Ascending aorta (tissue), 2 donors: ENCODE measurements at regions of chr14 and their contacts with region 1.

Region 1: DNA sequence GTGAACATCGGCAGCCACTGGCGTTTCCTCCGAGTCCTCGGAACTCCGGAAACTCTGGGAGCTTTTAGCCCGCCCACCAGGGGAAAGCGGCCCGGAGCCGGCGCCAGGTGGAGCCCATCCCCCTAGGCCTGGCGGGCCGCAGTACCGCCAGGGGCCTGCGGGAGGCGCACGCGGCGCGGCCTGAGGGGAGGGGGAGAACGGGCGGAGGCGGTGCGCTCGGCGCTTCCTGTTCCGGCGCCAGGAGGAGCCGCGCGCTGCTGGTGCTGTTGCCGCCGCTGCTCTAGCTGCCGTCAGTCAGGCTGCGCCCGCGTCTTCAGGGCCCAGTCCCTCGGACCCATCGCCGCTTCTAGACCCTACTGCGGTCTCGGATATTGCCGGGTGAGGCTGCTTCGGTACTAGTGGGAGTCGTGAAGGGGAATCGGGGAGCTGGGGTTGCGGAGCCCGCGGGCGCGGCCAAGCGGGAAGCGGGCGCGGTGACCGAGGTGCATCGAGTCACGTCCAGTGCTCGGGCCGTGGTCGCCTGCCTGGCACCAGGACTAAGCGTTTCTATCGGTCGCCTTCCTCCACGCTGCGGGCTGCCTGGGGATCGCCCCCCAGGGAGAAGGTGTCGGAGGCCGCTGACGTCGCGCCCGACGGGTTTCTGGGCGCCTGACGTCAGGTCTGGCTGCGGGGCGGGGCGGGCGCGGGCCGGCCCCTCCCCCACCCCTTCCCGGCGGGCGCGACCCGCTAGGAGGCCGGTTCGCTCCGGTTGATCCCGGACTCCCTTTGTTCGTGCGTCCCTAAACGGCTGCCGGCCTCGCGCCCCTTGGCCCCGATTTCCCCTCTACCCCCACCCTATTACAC is at the start of gene MAPK1IP1L:
- DNase-seq: peak; percentile 57 to 94
- H3K4me3 ChIP-seq: peak within 1 kb of the TSS; percentile 88 to 94
- H3K27ac ChIP-seq: peak within 1 kb of the TSS; percentile 99 to 100
- H3K4me1 ChIP-seq: peaks cover 6 to 20% of the 10 kb centered on the region in 2 donors
- H3K27me3 ChIP-seq: no peaks in the 10 kb centered on the region
- CTCF ChIP-seq: peak; percentile 100
- total RNA-seq, gene MAPK1IP1L: 51.8 TPM

Region 2: DNA sequence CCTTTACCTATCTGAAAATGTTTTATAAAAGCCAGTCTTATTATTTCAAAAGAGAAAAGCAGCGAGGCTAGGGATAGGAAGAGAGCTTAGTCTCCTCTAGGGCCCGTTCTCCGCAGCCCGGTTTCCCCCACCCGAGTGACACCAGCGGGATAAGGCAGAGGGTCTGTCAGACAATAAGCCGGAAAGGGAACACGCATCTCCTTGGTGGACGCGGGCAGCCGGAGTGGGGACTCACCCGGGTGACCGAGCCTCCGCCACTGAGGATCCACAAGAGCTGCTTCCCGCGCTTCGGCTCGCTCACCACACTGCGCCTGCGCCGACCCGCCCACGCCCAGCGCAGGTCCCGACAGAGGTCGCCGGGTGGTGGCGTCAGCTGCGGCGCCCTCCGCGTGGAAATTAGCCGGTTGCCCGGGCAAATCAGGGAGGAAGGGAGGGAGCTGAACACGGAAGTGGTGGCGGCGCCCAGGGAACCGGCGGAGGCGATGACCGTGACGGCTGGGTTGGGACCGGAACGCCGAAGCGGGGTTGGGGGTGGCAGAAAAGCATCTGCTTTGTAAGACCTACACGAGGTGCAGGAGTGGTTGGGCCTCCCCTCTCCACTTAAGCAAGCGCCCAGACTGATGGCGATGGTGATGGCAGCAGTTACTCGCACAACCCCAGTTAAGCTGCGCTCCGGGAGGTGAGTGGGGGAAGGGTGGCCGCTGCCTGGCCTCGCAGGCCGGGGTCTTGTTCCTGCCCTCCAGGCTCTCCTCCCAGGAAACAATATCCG is 24.7 kb before region 1 on chr14 and contains the starts of genes SOCS4 and WDHD1:
- intact Hi-C with region 1: loop called (anchors 1 kb)
- DNase-seq: peak; percentile 82 to 97
- H3K4me3 ChIP-seq: peak within 1 kb of the TSS; percentile 91 to 93
- H3K27ac ChIP-seq: peak within 1 kb of the TSS; percentile 82 to 91
- H3K4me1 ChIP-seq: peaks cover 4 to 15% of the 10 kb centered on the region in 2 donors
- H3K27me3 ChIP-seq: no peaks in the 10 kb centered on the region
- CTCF ChIP-seq: peak; percentile 2 to 14 (median 10)
- total RNA-seq, gene SOCS4: 12.9 TPM
- total RNA-seq, gene WDHD1: 0.11 TPM

Region 3: GRCh38 chr14:55094321-55095157 is 42.9 kb after region 1 on chr14:
- intact Hi-C with region 1: loop called (anchors 1 kb)
- DNase-seq: no peak
- H3K4me3 ChIP-seq: no peak overlapping the region
- H3K27ac ChIP-seq: no peak overlapping the region
- H3K4me1 ChIP-seq: no peaks in the 10 kb centered on the region
- H3K27me3 ChIP-seq: no peaks in the 10 kb centered on the region
- CTCF ChIP-seq: no peak

Region 4: GRCh38 chr14:55129428-55130195 is 78.0 kb after region 1 on chr14:
- intact Hi-C with region 1: loop called (anchors 2 kb)
- DNase-seq: peak in 1 of 2 donors; percentile 88
- H3K4me3 ChIP-seq: peak overlapping the region; percentile 77 to 92
- H3K27ac ChIP-seq: peak overlapping the region; percentile 95 to 97
- H3K4me1 ChIP-seq: peaks cover 10 to 34% of the 10 kb centered on the region in 2 donors
- H3K27me3 ChIP-seq: no peaks in the 10 kb centered on the region
- CTCF ChIP-seq: peak in 1 of 3 experiments; percentile 14

Region 5: GRCh38 chr14:56339855-56340701 is 1288.4 kb after region 1 on chr14:
- intact Hi-C with region 1: loop called (anchors 5 kb)
- DNase-seq: peak; percentile 19 to 87
- H3K4me3 ChIP-seq: no peak overlapping the region
- H3K27ac ChIP-seq: peak overlapping the region; percentile 42 to 51
- H3K4me1 ChIP-seq: peaks cover 2 to 31% of the 10 kb centered on the region in 2 donors
- H3K27me3 ChIP-seq: no peaks in the 10 kb centered on the region
- CTCF ChIP-seq: peak; percentile 60 to 79 (median 70)